ENCODE measurements at regions of chr2 and their contacts with region 1.

Region 1: DNA sequence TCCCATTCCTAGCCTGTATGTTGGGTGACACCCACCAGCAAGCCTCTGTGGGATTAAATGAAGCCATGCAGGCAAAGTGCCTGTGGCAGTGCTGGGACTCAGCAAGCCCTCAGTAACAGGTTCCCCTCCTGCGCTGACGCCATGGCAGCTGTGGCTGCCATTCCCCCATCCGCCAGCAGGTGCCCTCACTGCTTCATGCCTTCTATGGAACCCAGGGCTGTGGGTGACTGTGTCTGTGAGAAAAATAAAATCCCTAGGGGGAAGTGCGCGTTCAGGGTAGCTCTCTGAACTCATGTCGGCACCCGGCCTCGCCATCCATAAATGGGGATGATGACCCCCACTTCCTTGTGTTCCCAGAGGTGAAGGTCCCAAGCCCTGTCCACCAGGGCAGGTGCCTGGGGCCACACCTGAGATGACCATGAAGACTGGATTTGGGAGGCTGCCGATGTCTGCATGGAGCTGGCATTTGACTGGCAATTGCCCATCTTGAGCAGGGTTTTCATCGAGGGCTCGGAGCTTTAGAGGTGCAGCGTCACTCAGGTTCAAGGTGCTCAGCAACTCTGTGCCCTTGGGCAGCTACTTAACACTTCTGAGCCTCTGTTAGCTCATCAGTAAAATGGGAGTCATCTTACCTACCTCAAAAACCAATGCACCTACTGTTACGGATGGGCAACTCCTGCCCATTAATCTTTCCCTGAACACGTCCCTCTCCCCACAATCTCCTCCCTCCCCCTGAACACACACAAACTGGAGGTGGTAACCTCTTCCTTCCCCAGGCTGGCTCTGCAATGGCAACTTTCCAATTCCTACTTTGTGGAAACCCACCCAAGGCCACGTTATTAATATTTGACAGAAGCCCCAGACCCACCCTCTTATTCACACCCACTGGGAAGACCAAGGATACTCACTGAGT is 2.9 kb upstream of the MAL start:
- DNase-seq: peak; percentile 76
- ATAC-seq: peak; percentile 74 to 79
- H3K4me3 ChIP-seq: no peak overlapping the region
- H3K27ac ChIP-seq: no peak overlapping the region
- H3K4me1 ChIP-seq: peaks cover 10% of the 10 kb centered on the region
- H3K27me3 ChIP-seq: peaks cover 51% of the 10 kb centered on the region
- CTCF ChIP-seq: peak; percentile 92

Region 2: GRCh38 chr2:95076784-95077529 is 54.4 kb after region 1 on chr2:
- intact Hi-C with region 1: loop called (anchors 5 kb)
- DNase-seq: peak; percentile 93
- ATAC-seq: peak; percentile 92 to 95
- H3K4me3 ChIP-seq: peak overlapping the region; percentile 55
- H3K27ac ChIP-seq: no peak overlapping the region
- H3K4me1 ChIP-seq: peaks cover 37% of the 10 kb centered on the region
- H3K27me3 ChIP-seq: peaks cover 21% of the 10 kb centered on the region
- CTCF ChIP-seq: peak; percentile 86

Region 3: DNA sequence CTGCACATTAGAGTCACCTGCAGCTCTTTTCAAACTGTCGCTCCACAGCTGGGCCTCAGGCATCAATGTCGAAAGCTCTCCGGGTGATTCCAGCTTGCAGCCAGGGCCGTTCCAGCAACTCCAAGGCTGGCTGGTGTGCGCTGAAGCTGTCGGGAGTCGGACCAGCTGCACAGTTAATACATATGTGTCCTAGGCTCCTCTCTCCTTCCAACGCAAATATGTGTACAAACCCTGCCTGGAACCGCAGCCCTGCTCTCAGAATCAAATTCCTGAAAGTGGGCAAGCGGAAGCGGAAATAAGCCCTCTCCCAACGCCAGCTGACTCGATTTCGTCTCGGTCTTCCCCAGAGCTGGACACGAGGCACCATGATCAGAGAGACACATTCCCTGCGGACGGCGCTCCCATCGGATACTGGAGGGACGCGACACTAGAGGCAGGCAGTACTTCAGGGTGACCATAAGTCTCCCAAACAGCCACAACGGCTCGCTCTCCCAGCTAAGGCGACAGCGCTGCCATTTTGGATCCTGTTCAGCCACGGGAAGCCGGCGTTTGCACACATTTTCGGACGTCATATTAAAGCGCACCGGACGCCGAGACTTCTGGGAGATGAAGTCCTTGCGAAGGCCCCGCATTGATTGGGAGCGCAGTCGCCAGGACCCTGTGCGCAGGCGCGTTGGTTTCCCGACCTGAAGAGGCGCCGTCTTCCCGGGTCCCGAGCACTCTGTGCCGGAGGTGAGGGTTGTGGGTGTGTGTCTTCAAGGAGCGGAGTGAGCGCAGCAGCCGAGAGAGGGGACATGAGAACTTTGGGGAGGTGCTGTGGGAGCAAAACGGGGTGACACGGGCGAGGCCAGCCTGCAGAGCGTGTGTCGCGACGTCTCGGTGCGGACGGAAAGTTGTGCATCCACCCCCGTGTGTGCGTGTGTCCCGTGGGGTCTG is 142.8 kb after region 1 on chr2 and contains the start of gene ZNF2:
- intact Hi-C with region 1: no loop called
- DNase-seq: peak; percentile 98
- ATAC-seq: peak; percentile 98 to 99
- H3K4me3 ChIP-seq: peak within 1 kb of the TSS; percentile 84
- H3K27ac ChIP-seq: peak within 1 kb of the TSS; percentile 95
- H3K4me1 ChIP-seq: peaks cover 19% of the 10 kb centered on the region
- H3K27me3 ChIP-seq: no peaks in the 10 kb centered on the region
- CTCF ChIP-seq: no peak
- total RNA-seq, gene ZNF2: 4.1 TPM

Measured in lower lobe of right lung (tissue), 2 donors.